CD8-positive, alpha-beta memory T cell (primary cell): ENCODE measurements at regions of chr7 and their contacts with region 1.

Region 1: GRCh38 chr7:90334193-90334843 is 12.2 kb upstream of the GTPBP10 start:
- DNase-seq: no peak
- H3K4me3 ChIP-seq: no peak overlapping the region
- H3K4me3 Mint-ChIP-seq: no peak overlapping the region
- H3K27ac ChIP-seq: no peak overlapping the region
- H3K27ac Mint-ChIP-seq: no peak overlapping the region
- H3K4me1 ChIP-seq: no peaks in the 10 kb centered on the region
- H3K4me1 Mint-ChIP-seq: peaks cover 0 to 1% (median 0%) of the 10 kb centered on the region in 3 donors
- H3K27me3 ChIP-seq: no peaks in the 10 kb centered on the region
- H3K27me3 Mint-ChIP-seq: peaks cover 5 to 10% of the 10 kb centered on the region in 2 donors

Region 2: GRCh38 chr7:90312745-90313144 is 21.6 kb before region 1 on chr7:
- CTCF ChIA-PET with region 1: no interaction called
- POLR2A ChIA-PET with region 1: no interaction called
- DNase-seq: no peak
- H3K4me3 ChIP-seq: no peak overlapping the region
- H3K4me3 Mint-ChIP-seq: no peak overlapping the region
- H3K27ac ChIP-seq: no peak overlapping the region
- H3K27ac Mint-ChIP-seq: no peak overlapping the region
- H3K4me1 ChIP-seq: no peaks in the 10 kb centered on the region
- H3K4me1 Mint-ChIP-seq: no peaks in the 10 kb centered on the region
- H3K27me3 ChIP-seq: no peaks in the 10 kb centered on the region
- H3K27me3 Mint-ChIP-seq: peaks cover 9 to 31% of the 10 kb centered on the region in 2 donors

Region 3: GRCh38 chr7:90351987-90352386 is 17.7 kb after region 1 on chr7:
- CTCF ChIA-PET with region 1: no interaction called
- POLR2A ChIA-PET with region 1: interaction called, 10 read pairs
- DNase-seq: no peak
- H3K4me3 ChIP-seq: no peak overlapping the region
- H3K4me3 Mint-ChIP-seq: no peak overlapping the region
- H3K27ac ChIP-seq: no peak overlapping the region
- H3K27ac Mint-ChIP-seq: peak overlapping the region in 2 of 8 donors; percentile 8 to 59
- H3K4me1 ChIP-seq: peaks cover 16% of the 10 kb centered on the region
- H3K4me1 Mint-ChIP-seq: peaks cover 51 to 67% (median 63%) of the 10 kb centered on the region in 3 donors
- H3K27me3 ChIP-seq: no peaks in the 10 kb centered on the region
- H3K27me3 Mint-ChIP-seq: no peaks in the 10 kb centered on the region